ENCODE measurements at regions of chr22 and their contacts with region 1.

Region 1: DNA sequence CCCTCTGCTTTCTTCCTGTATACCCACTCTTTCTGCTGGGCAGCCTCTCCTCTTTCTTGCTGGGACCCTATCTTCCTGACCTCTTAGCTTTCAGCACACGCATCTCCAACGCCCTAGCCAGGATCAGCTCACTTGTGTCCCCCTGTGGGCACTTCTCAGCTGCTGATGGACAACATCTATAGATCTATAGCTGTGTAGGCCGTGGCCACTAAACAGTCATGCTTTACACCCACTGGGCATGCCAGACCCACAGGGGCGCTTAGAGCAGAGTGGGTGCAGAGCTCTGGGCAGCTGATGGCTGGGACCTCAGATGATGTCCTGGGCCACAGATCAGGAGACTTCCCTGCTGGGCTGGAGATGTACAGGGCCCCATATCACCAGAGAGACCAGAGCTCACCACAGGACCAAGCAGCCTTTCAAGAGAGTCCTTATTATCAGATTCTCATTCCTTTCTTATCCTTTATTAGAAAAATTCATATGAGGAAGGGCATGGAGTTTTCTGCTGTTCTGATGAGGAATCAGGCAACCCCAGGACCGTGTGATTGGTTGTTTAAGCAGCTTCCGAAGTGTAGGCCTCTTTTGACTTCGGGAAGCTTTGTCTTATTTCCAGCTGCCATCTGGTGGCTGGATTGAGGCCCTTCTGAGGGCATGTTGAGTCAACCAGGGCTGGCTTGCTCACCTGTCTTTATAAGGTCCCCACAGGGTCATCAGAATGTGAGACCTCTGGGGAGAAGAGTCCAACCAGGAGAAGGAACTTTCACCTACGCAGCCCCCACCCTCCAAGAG is 60.5 kb downstream of the OSBP2 start:
- ATAC-seq: peak; percentile 72 to 99 (median 85)
- H3K4me3 ChIP-seq: no peak overlapping the region
- H3K27ac ChIP-seq: no peak overlapping the region
- H3K4me1 ChIP-seq: no peaks in the 10 kb centered on the region

Region 2: GRCh38 chr22:30615543-30615954 is 139.6 kb before region 1 on chr22:
- in situ Hi-C with region 1: no loop called
- ATAC-seq: no peak
- H3K4me3 ChIP-seq: no peak overlapping the region
- H3K27ac ChIP-seq: no peak overlapping the region
- H3K4me1 ChIP-seq: no peaks in the 10 kb centered on the region

Region 3: GRCh38 chr22:30634471-30635233 is 120.5 kb before region 1 on chr22:
- in situ Hi-C with region 1: loop called in 3 of 9 experiments (anchors 5 to 25 kb)
- ATAC-seq: peak; percentile 57 to 68 (median 62)
- H3K4me3 ChIP-seq: peak overlapping the region; percentile 31 to 49 (median 39)
- H3K27ac ChIP-seq: peak overlapping the region; percentile 62 to 68
- H3K4me1 ChIP-seq: peaks cover 17 to 22% of the 10 kb centered on the region in 2 donors

Region 4: DNA sequence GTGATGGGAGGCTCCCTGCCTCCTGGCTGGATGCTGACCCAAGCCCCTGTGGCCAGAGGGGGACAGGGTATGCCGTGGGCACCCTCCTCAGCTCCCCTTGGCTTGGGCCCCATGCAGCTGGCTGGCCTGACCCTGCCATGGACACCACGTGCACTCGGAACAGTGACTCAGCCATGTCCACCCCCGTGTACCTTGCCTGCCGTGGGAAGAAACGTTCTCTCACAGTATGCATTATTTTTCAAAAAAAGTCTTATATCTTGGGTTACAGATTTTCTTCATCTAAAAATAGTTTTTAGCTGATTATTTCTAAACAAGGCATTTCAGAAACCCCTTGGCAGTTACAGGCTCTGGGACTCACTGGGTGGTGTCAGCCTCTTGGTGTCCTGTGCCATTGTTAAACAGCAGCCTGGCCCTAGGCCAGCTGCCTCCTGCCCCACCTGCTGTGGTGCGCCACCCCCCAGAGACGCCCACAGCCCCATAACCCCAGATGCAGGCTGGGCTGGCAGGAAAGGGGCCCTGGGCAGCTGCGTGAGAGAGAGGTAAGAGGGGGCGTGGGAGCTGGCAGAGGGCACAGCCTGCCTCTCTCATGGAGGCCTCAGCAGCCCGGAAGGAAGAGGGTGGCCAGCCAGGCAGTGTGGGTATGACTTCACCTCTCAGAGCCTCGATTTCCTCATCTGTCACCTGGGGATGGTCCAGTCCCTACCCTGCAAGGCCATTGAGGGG is 113.7 kb after region 1 on chr22:
- in situ Hi-C with region 1: no loop called
- ATAC-seq: peak in 7 of 8 experiments; percentile 38 to 83 (median 68)
- H3K4me3 ChIP-seq: no peak overlapping the region
- H3K27ac ChIP-seq: no peak overlapping the region
- H3K4me1 ChIP-seq: peaks cover 10 to 14% of the 10 kb centered on the region in 2 donors

Region 5: GRCh38 chr22:30890686-30891442 is 135.7 kb after region 1 on chr22:
- in situ Hi-C with region 1: loop called in 1 of 9 experiments (anchors 25 kb)
- ATAC-seq: peak in 7 of 8 experiments; percentile 20 to 81 (median 36)
- H3K4me3 ChIP-seq: no peak overlapping the region
- H3K27ac ChIP-seq: no peak overlapping the region
- H3K4me1 ChIP-seq: peaks cover 0 to 8% of the 10 kb centered on the region in 2 donors

Region 6: DNA sequence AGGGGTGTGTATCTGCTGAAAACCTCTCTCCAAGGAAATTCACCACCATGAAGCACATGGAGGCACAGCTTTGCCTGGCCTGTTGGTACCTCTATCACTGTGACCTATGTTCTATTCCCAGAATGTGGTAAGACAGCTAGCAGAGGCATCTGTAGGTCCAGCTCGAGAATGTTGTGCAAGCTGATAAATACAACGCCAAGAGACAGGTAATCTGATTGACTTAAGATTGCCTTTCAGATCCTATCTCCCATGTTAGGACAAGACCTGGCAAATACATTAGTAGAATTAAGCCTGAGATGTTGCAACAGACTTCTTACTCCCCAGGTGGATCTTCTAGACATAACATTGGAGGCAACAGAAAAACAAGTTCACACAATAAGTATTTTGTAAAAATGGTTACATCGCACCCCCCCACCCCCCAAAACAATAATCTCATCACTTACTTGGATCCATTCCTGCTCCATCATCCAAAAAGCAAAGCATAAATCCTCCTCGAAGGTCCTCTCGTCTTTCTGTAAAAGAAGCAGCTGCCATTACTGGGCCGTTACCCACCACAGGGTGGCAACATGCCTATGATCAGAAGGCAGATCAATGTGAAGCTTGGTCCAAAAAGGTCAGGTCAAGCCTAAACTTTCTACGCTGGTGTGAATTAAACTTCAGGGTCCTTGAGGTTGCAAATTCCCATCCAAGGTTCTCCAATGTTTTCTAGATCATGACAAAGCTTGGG is 194.9 kb after region 1 on chr22:
- in situ Hi-C with region 1: no loop called
- ATAC-seq: no peak
- H3K4me3 ChIP-seq: no peak overlapping the region
- H3K27ac ChIP-seq: no peak overlapping the region
- H3K4me1 ChIP-seq: peaks cover 9 to 20% of the 10 kb centered on the region in 2 donors

Region 7: GRCh38 chr22:31284281-31285155 is 529.4 kb after region 1 on chr22:
- in situ Hi-C with region 1: no loop called
- ATAC-seq: peak in 5 of 8 experiments; percentile 29 to 66 (median 43)
- H3K4me3 ChIP-seq: no peak overlapping the region
- H3K27ac ChIP-seq: peak overlapping the region in 1 of 2 donors; percentile 66
- H3K4me1 ChIP-seq: peaks cover 0 to 9% of the 10 kb centered on the region in 2 donors